K562 (cell line): ENCODE measurements at regions of chr1 and their contacts with region 1.

Region 1: DNA sequence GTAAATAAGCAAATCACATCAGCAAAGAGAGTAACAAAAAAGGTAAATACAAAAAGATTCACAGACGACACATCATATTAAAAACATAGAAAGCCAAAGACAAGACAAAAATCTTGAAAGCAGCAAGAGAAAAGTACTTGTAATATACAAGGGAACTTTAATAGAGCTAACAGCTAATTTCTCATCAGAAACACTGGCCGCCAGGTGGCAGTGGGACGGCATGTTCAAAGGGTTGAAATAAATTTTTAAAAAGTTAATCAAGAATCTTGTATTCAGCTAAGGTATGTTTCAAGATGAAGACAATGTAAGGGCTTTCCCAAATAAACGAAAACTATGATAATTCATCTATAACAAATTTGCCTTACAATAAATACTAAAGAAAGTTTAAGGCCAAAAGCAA is 358.1 kb downstream of the LRRIQ3 start:
- DNase-seq: peak in 1 of 4 experiments; percentile 13
- ATAC-seq: no peak
- H3K4me3 ChIP-seq: no peak overlapping the region
- H3K27ac ChIP-seq: no peak overlapping the region
- H3K4me1 ChIP-seq: no peaks in the 10 kb centered on the region
- H3K27me3 ChIP-seq: no peaks in the 10 kb centered on the region
- CTCF ChIP-seq: peak in 1 of 3 experiments; percentile 16; a peak in 1 of 6 replicates
- EP300 ChIP-seq: no peak
- POLR2A ChIP-seq: no peak
- RAD21 ChIP-seq: peak; percentile 13 to 38; a peak in 2 of 4 replicates

Region 2: DNA sequence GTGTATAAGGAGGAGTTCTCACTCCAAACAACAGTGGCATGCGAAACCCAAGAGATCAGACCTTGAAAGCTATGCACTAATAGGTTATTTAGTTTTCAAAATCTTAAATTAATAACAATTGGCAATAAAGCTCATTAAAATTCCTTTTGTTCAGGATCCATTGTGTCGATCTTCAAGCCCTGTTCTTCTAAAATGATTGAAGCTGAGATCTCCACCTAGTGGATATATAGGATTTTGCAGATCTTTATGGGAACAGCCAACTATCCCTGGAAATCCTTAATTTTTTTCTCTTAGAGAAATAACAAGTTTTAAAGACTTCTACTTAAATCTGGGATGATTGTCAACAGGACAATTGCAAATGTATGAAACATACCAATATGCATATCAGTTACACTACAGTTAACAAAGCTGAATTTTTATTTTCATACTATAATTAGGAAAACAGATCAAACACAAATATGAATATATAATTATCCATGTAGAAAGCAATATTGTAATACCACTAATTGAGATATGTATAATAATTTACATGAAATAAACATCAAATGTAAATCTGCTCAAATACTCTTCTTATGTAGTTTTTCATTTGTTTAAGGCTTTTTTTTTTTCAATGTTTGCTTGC is 629.2 kb after region 1 on chr1:
- CTCF ChIA-PET with region 1: no interaction called
- POLR2A ChIA-PET with region 1: no interaction called
- in situ Hi-C with region 1: no loop called
- intact Hi-C with region 1: loop called (anchors 10 kb)
- DNase-seq: peak; percentile 15 to 33 (median 30)
- ATAC-seq: 0 out of 3 replicates have a peak, but pooled peaks have one; percentile 38
- H3K4me3 ChIP-seq: no peak overlapping the region
- H3K27ac ChIP-seq: no peak overlapping the region
- H3K4me1 ChIP-seq: no peaks in the 10 kb centered on the region
- H3K27me3 ChIP-seq: no peaks in the 10 kb centered on the region
- CTCF ChIP-seq: peak; percentile 13 to 50 (median 29); a peak in 3 of 6 replicates
- EP300 ChIP-seq: no peak
- POLR2A ChIP-seq: no peak
- RAD21 ChIP-seq: peak; percentile 52 to 55

Region 3: DNA sequence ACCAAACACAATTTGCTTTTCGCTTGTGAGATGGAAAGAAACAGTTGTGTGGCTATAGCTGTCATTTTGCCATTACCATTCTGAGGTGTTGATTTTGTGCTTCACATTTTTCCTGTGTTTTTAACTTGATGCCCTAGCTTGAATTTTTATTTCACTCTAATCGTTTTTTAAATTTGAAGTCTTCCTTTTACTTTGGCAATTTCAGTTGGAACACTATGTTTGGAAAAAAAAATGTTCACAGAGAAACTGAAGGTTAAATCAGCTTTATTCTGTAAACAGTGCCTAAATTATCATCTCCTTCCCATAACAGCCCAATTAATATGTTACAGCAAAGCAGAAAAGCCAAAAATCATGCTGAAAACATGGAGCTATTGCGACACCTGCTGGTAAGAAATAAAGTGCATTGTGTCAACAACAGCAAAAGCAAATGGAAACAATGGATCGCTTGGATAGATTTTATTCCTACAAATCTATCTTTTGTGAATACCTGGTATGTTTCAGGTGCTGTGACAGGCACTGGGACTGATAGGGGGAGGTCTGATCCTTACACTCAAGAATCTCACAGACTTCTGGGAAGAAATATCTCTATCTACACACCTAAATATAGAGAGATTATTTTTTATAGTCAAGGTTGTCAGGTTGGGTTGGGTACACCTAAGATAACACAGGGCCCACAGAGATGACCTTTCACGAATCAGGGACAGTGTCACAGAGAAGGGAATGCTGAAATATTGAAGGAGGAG is 849.9 kb after region 1 on chr1:
- CTCF ChIA-PET with region 1: no interaction called
- POLR2A ChIA-PET with region 1: no interaction called
- in situ Hi-C with region 1: no loop called
- intact Hi-C with region 1: loop called (anchors 2 kb)
- DNase-seq: peak; percentile 17 to 75 (median 23)
- ATAC-seq: peak; percentile 83
- H3K4me3 ChIP-seq: no peak overlapping the region
- H3K27ac ChIP-seq: no peak overlapping the region
- H3K4me1 ChIP-seq: no peaks in the 10 kb centered on the region
- H3K27me3 ChIP-seq: no peaks in the 10 kb centered on the region
- CTCF ChIP-seq: peak; percentile 42 to 83 (median 73); a peak in 5 of 6 replicates
- EP300 ChIP-seq: no peak
- POLR2A ChIP-seq: no peak
- RAD21 ChIP-seq: peak; percentile 66 to 83